Activated CD4-positive, alpha-beta T cell treated with anti-CD3 and anti-CD28 coated beads, Interleukin-2, amount 10 ng/mL, durations not matched to agents 24 days and 14 days (primary cell): ENCODE measurements at regions of chr18 and their contacts with region 1.

Region 1: GRCh38 chr18:30787410-30787809 is 255.1 kb downstream of the DSC3 start:
- DNase-seq: no peak
- H3K4me3 Mint-ChIP-seq: no peak overlapping the region
- H3K27ac Mint-ChIP-seq: no peak overlapping the region
- H3K4me1 Mint-ChIP-seq: no peaks in the 10 kb centered on the region
- H3K27me3 Mint-ChIP-seq: no peaks in the 10 kb centered on the region

Region 2: GRCh38 chr18:30632071-30632698 is 155.2 kb before region 1 on chr18:
- intact Hi-C with region 1: loop called (anchors 5 kb)
- DNase-seq: no peak
- H3K4me3 Mint-ChIP-seq: no peak overlapping the region
- H3K27ac Mint-ChIP-seq: no peak overlapping the region
- H3K4me1 Mint-ChIP-seq: no peaks in the 10 kb centered on the region
- H3K27me3 Mint-ChIP-seq: no peaks in the 10 kb centered on the region